Dendritic cell treated with granulocyte-macrophage colony-stimulating factor and Interleukin-4, amounts not matched to agents 40 ng/mL and 50 ng/mL, for 4 days (primary cell): ENCODE measurements at regions of chr9 and their contacts with region 1.

Region 1: DNA sequence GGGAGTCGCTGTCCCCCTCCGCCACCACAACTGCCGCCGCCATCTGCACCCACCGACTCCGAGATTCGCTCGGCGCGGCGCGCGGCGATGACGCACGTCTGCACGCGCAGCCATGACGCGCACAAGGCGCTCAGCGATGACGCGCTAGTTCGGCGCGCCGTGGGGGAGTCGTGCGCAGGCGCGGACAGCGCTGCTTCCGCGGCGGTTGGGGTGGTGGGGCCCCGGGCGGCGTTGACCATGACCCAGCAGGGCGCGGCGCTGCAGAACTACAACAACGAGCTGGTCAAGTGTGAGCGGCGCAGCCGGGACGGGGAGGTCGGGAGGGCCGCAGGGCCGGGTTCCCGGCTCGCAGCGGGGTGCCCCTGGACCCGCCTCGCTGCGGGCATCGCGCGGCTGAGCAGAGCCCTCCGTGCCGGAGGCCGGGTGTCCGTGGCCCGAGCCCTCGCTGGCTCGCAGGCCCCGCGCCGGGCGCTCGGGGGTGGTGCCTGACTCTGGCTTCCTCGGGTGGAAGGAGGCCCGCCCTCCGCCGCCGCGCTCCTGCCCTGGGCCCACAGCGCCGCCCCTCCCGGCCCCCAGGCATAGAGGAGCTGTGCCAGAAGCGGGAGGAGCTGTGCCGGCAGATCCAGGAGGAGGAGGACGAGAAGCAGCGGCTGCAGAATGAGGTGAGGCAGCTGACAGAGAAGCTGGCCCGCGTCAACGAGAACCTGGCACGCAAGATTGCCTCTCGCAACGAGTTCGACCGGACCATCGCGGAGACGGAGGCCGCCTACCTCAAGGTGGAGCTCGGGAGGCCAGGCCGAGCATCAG is at the starts of genes ANAPC2 and SSNA1:
- H3K4me3 Mint-ChIP-seq: peak within 1 kb of the TSS; percentile 96
- H3K27ac Mint-ChIP-seq: peak within 1 kb of the TSS; percentile 90
- H3K4me1 Mint-ChIP-seq: peaks cover 63% of the 10 kb centered on the region
- H3K27me3 Mint-ChIP-seq: no peaks in the 10 kb centered on the region

Region 2: DNA sequence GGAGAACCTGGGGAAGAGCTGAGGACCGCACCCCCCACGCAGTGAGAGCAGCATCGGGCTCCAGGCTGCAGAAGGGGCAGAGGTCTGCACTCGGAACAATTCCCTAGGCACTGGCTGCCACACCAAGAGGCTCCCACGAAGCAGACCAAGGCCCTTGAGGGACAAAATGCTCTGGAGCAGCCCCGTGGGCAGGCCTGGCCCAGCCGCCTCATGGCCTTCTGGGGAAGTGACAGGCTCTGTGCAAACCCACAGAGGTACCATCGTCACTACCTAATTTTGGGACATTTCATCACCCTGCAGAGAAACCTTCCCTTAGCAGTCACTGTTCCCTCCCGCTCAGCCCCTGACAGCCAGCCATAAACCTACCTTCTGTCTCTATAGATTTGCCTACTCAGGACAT is 260.1 kb before region 1 on chr9:
- intact Hi-C with region 1: no loop called
- H3K4me3 Mint-ChIP-seq: no peak overlapping the region
- H3K27ac Mint-ChIP-seq: peak overlapping the region; percentile 21
- H3K4me1 Mint-ChIP-seq: peaks cover 24% of the 10 kb centered on the region
- H3K27me3 Mint-ChIP-seq: no peaks in the 10 kb centered on the region

Region 3: DNA sequence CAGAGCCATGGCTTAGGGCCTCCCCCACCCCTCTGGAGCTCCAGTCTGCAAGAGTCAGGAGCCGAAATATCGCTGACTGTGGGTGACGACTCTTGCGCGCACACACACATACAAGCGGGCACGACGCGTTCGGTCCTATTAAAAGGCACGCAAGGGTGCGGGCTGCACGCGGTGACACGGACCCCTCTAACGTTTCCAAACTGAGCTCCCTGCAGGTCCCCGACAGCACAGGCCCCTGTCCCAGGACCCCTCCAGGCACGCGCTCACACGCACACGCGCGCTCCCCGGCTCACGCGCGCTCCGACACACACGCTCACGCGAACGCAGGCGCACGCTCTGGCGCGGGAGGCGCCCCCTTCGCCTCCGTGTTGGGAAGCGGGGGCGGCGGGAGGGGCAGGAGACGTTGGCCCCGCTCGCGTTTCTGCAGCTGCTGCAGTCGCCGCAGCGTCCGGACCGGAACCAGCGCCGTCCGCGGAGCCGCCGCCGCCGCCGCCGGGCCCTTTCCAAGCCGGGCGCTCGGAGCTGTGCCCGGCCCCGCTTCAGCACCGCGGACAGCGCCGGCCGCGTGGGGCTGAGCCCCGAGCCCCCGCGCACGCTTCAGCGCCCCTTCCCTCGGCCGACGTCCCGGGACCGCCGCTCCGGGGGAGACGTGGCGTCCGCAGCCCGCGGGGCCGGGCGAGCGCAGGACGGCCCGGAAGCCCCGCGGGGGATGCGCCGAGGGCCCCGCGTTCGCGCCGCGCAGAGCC is 49.8 kb before region 1 on chr9 and contains the start of gene GRIN1:
- intact Hi-C with region 1: no loop called
- H3K4me3 Mint-ChIP-seq: no peak within 1 kb of the TSS
- H3K27ac Mint-ChIP-seq: no peak within 1 kb of the TSS
- H3K4me1 Mint-ChIP-seq: peaks cover 11% of the 10 kb centered on the region
- H3K27me3 Mint-ChIP-seq: peaks cover 84% of the 10 kb centered on the region

Region 4: GRCh38 chr9:137150617-137151457 is 37.9 kb before region 1 on chr9:
- intact Hi-C with region 1: no loop called
- H3K4me3 Mint-ChIP-seq: peak overlapping the region; percentile 40
- H3K27ac Mint-ChIP-seq: peak overlapping the region; percentile 75
- H3K4me1 Mint-ChIP-seq: peaks cover 12% of the 10 kb centered on the region
- H3K27me3 Mint-ChIP-seq: peaks cover 43% of the 10 kb centered on the region

Region 5: GRCh38 chr9:137205126-137206069 is 16.7 kb after region 1 on chr9 and contains the starts of genes NDOR1 and TMEM203:
- intact Hi-C with region 1: loop called (anchors 1 kb)
- H3K4me3 Mint-ChIP-seq: peak within 1 kb of the TSS; percentile 97
- H3K27ac Mint-ChIP-seq: peak within 1 kb of the TSS; percentile 96
- H3K4me1 Mint-ChIP-seq: peaks cover 57% of the 10 kb centered on the region
- H3K27me3 Mint-ChIP-seq: no peaks in the 10 kb centered on the region